ENCODE measurements at regions of chr14 and their contacts with region 1.

Region 1: GRCh38 chr14:103279137-103280025 is 54.7 kb upstream of the EIF5 start:
- DNase-seq: no peak
- ATAC-seq: peak; percentile 49

Region 2: GRCh38 chr14:103207029-103207387 is 72.4 kb before region 1 on chr14:
- intact Hi-C with region 1: loop called (anchors 10 kb)
- DNase-seq: peak; percentile 89
- ATAC-seq: peak; percentile 95

Measured in sciatic nerve (tissue), 2 donors.